Left colon (tissue), 2 donors: ENCODE measurements at regions of chr12 and their contacts with region 1.

Region 1: GRCh38 chr12:49232940-49233841 is 31.7 kb upstream of the TUBA1C start:
- DNase-seq: peak; percentile 34 to 40
- ATAC-seq: no peak

Region 2: DNA sequence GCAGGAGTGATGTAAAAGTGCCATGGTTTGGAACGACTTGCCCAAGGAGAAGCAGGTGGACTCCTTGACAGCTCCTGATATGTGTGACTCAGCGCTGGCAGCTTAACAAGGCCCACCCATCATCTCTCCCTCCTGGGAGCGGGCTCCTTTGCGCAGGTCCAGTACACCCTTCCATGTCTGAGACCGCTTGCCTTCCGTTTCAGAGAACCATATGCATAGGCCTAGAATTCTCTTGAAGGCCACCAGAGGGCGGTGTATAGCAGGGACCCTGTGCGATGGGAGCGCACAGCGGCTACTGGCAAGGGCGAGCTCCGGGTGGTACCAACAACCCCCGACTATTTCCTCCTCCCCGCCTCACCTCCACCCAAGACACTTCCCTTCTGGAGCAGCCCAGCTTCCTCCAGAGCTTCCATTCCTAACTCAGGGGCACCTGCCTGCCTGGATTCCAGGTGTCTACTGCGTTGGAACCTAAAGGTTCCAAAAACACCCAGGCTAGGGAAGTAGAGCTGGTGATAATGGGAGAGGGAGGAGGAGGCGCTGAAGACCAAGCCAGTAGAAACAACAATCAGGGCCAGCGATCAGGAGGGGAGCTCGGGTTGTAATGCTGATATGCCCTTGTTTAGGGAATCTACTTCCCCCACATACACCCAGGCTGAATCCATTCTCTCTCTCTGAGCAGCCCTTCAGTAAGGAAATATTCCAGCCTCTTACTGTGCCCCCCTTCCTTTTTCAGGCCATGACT is 144.8 kb before region 1 on chr12:
- intact Hi-C with region 1: loop called in 1 of 2 experiments (anchors 10 kb)
- DNase-seq: peak; percentile 66 to 73
- ATAC-seq: peak; percentile 93

Region 3: GRCh38 chr12:49130151-49131050 is 102.8 kb before region 1 on chr12:
- intact Hi-C with region 1: loop called in 1 of 2 experiments (anchors 2 kb)
- DNase-seq: peak; percentile 95 to 96
- ATAC-seq: peak; percentile 76

Region 4: GRCh38 chr12:49188914-49189367 is 44.2 kb before region 1 on chr12 and contains the start of gene TUBA1A:
- intact Hi-C with region 1: loop called in 1 of 2 experiments (anchors 5 kb)
- DNase-seq: peak; percentile 84 to 90
- ATAC-seq: peak; percentile 76
- total RNA-seq, gene TUBA1A: 12.8 to 57.7 TPM

Region 5: DNA sequence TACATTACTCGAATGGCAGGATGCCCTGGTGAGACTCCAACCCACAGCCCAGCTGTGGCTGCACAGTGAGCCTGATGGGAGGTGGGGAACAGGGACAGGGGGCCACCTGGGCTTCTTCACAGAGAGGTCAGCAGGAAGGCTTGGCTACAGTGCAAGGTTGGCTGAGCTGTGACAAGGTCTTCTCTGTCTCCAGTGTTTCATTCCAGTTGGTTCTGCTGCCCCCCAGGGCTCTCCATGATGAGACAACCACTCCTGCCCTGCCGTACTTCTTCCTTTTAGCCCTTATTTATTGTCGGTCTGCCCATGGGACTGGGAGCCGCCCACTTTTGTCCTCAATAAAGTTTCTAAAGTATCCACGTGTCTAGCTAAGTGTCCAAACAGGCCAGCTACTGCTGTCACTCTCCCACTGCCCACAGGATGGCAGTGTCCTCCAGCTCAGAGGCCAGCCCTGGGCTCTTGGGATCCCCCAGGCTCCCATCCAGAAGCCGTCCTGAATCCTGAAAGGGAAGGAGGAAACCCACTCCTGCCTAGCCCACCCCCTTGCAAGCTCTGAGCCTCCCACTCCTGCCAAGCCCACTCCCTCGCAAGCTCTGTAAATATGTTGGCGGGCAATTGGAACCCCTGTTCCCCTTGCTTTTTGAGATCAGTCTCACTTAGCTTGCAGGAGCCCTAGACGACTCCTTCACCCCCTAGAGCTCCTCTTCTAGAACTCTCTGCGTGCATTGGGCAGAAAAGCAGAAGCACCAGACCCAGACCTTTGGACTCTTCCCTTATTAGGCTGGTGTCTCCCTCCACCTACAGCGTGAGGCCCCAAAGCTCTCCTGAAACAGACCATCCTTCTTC is 98.4 kb after region 1 on chr12:
- intact Hi-C with region 1: no loop called
- DNase-seq: peak; percentile 72
- ATAC-seq: peak; percentile 94

Region 6: GRCh38 chr12:49609746-49610089 is 376.5 kb after region 1 on chr12:
- intact Hi-C with region 1: no loop called
- DNase-seq: no peak
- ATAC-seq: no peak